OCI-LY7 (cell line): ENCODE measurements at regions of chr11 and their contacts with region 1.

Region 1: DNA sequence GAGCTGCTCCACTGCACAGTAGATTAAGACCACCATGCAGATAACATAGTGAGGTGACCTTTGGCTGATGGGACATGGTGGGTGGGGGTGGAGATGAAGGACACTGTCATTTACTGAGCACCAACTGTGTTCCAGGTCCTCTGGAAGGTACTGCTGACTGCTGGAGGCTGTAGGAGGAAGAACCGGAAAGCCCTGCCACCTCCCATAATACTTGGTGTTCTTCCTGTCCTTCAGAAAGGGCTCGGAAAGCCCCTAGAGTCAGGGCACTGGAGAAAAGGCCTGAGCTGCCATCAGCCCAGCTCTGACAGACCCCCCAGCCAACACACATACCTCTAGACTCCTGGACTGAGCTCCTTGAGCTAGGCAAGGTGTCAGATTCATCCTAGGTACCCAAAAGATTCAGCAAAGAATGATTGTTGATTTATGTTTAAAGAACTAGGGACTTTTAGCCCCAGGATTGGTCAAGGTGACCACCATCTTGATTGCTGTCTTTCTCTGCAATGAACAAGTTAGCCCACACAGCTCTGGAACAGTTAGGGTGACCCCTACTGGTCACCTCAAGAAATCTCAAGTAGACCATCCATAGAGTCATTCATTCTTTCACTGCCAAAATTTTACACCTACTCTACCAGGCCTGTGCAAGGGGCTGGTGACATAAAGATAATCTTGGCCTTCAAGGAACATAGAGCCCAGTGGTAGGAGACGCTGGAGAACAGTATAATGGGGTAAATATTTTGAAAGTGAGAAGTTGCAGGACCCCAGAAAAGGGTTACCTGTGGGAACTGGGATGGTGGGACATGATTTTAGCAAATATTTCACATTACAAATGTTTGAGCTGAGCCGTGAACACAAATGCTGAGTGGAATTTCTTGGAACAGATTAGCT is 39.4 kb downstream of the IRAG1 start:
- DNase-seq: peak; percentile 63
- H3K4me3 ChIP-seq: no peak overlapping the region
- H3K27ac ChIP-seq: no peak overlapping the region
- H3K4me1 ChIP-seq: no peaks in the 10 kb centered on the region
- CTCF ChIP-seq: peak; percentile 89

Region 2: DNA sequence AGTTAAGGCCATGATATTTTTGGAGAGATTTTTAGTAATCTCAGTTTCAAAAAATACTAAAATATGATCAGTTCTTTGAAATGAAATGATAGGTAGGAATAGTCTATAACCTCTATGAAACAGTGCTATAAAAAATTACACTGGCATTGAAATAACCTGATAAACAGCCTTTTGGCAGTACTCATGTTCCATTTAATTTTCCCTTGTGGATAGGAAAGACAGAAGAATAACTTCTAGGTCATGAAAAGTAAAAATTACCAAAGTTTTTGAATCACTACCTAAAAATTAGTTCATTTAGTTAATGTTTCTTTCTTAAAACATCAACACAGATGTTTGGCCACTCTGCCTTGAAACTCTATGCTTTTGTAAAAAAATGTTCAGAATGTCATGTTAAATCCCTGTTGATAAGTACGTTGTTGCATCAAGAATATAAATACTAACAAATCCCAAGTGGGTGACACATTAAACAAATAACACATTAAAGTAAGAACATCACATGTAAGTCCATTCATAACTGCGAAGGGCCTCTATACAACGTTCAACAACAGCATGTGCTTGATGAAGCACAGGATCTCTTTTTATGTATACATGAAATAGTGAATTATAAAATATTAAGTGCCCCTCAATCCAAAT is 700.1 kb before region 1 on chr11:
- CTCF ChIA-PET with region 1: no interaction called
- POLR2A ChIA-PET with region 1: no interaction called
- intact Hi-C with region 1: no loop called
- DNase-seq: no peak
- H3K4me3 ChIP-seq: no peak overlapping the region
- H3K27ac ChIP-seq: no peak overlapping the region
- H3K4me1 ChIP-seq: no peaks in the 10 kb centered on the region
- CTCF ChIP-seq: no peak

Region 3: DNA sequence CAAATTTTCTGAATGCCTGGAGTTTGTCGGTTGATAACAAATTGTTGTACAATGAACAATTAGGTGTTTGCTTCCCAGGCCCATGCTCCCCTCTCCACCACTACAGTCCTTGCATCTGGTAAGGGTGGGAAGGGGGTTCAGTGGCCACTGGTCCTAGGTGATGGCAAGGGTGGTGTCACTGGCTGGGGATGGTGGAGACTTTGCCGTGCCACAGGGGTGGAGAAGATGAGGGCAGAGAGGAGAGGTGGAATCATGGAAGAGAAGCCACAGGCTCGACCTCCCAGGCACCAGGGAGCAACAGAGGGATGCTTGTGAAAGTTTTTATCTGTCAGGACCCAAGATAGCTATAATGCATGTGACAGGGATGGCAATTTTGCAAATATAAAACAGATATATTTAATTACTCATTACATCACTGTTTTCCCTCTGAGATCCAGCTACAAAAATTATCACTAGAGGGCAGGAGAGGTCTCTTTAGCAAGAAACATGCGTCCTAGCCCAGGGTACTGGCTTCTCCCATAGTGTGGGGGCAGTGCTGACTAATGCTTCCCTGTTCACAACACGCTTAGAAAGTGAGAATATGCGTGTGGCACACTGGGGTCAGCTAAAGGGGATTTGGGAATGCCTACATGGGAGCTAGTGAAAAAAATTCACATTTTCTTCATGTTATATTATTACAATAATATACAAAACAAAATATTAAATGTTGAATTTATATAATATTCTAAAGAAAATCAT is 248.1 kb before region 1 on chr11:
- CTCF ChIA-PET with region 1: no interaction called
- POLR2A ChIA-PET with region 1: no interaction called
- intact Hi-C with region 1: loop called (anchors 1 kb)
- DNase-seq: peak; percentile 84
- H3K4me3 ChIP-seq: no peak overlapping the region
- H3K27ac ChIP-seq: no peak overlapping the region
- H3K4me1 ChIP-seq: peaks cover 4% of the 10 kb centered on the region
- CTCF ChIP-seq: peak; percentile 93

Region 4: GRCh38 chr11:10413268-10413667 is 240.9 kb before region 1 on chr11:
- CTCF ChIA-PET with region 1: no interaction called
- POLR2A ChIA-PET with region 1: interaction called, 4 read pairs
- intact Hi-C with region 1: loop called (anchors 1 kb)
- DNase-seq: peak; percentile 69
- H3K4me3 ChIP-seq: no peak overlapping the region
- H3K27ac ChIP-seq: no peak overlapping the region
- H3K4me1 ChIP-seq: peaks cover 4% of the 10 kb centered on the region
- CTCF ChIP-seq: peak; percentile 79

Region 5: DNA sequence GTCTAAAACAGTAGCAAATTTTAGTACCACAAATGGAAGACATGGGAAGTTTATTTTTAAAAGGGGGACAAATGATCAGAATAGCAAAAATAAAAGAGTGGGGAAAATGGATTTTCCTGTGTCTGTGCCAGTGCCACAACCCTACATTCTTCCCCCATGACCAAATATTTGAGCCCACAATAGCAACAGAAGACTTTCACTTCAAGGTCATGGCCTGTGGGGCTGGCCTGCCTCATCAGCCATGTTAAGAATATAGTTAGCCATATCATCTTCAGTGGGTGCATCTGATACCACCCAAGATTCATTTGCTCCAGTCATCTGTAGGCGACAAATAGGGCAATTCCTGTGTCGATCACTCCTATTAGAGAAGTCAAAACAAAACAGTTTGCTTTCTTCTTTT is 139.5 kb before region 1 on chr11:
- CTCF ChIA-PET with region 1: no interaction called
- POLR2A ChIA-PET with region 1: no interaction called
- intact Hi-C with region 1: loop called (anchors 5 kb)
- DNase-seq: no peak
- H3K4me3 ChIP-seq: no peak overlapping the region
- H3K27ac ChIP-seq: no peak overlapping the region
- H3K4me1 ChIP-seq: no peaks in the 10 kb centered on the region
- CTCF ChIP-seq: no peak

Region 6: GRCh38 chr11:10735481-10736475 is 81.6 kb after region 1 on chr11:
- CTCF ChIA-PET with region 1: no interaction called
- POLR2A ChIA-PET with region 1: no interaction called
- intact Hi-C with region 1: loop called (anchors 5 kb)
- DNase-seq: peak; percentile 80
- H3K4me3 ChIP-seq: no peak overlapping the region
- H3K27ac ChIP-seq: no peak overlapping the region
- H3K4me1 ChIP-seq: peaks cover 4% of the 10 kb centered on the region
- CTCF ChIP-seq: peak; percentile 92